ENCODE measurements at regions of chr6 and their contacts with region 1.

Region 1: GRCh38 chr6:87407901-87408720 is at the start of gene CFAP206:
- DNase-seq: peak; percentile 78 to 84
- H3K4me3 ChIP-seq: peak within 1 kb of the TSS; percentile 72 to 89
- H3K27ac ChIP-seq: peak within 1 kb of the TSS; percentile 71 to 72
- H3K4me1 ChIP-seq: peaks cover 0 to 4% (median 0%) of the 10 kb centered on the region in 4 donors
- H3K27me3 ChIP-seq: no peaks in the 10 kb centered on the region
- CTCF ChIP-seq: no peak

Region 2: GRCh38 chr6:87723170-87724078 is 315.3 kb after region 1 on chr6:
- intact Hi-C with region 1: loop called (anchors 10 kb)
- DNase-seq: peak; percentile 71 to 87
- H3K4me3 ChIP-seq: no peak overlapping the region
- H3K27ac ChIP-seq: peak overlapping the region in 1 of 2 donors; percentile 22
- H3K4me1 ChIP-seq: peaks cover 0 to 16% (median 6%) of the 10 kb centered on the region in 4 donors
- H3K27me3 ChIP-seq: no peaks in the 10 kb centered on the region
- CTCF ChIP-seq: no peak

Measured in tibial artery (tissue), 4 donors.